CD8-positive, alpha-beta T cell (primary cell): ENCODE measurements at regions of chr3 and their contacts with region 1.

Region 1: DNA sequence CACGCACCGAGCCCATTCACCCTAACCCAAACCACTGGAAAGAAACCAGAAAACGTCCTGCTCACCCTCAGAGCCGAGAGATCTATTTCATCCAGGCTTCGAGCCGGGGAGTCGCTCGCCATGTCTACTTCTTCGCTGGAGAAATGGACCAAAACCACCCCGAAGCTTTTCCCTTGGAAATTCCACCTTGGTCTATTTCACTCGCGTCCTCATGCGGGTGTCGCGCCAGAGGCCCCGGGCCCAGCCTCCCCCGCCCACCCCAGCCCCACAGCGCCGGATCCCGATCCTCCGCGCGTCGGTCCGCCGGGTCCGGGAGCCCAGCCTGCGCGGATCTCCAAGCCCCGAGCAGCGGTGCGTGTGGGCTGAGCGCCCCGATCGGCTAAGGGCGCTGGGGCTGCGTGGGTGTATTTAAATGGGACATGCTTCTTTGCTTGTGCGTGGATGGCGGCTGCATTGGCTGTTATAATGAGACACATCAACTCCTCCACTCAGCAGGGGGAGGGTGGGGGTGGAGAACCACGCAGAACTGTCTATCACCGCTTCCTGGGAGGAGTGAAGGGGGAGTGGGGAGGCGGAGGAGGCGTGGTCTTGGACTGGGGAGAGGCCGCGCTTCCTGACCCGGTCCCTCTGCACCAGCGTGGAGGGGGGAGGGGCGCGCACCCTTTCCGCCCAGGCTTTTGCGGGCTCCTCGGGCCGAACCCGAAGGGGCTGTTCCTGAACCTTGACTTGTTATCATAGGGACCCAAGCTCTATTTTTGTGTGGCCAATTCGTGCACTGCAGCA is at the start of gene TNIK:
- DNase-seq: peak; percentile 86 to 98 (median 92)
- ATAC-seq: peak; percentile 85
- H3K4me3 ChIP-seq: peak within 1 kb of the TSS; percentile 84 to 96
- H3K4me3 Mint-ChIP-seq: peak within 1 kb of the TSS; percentile 96
- H3K27ac ChIP-seq: peak within 1 kb of the TSS; percentile 53 to 70
- H3K27ac Mint-ChIP-seq: peak within 1 kb of the TSS; percentile 96
- H3K4me1 ChIP-seq: peaks cover 40% of the 10 kb centered on the region
- H3K4me1 Mint-ChIP-seq: peaks cover 48% of the 10 kb centered on the region
- H3K27me3 ChIP-seq: no peaks in the 10 kb centered on the region
- H3K27me3 Mint-ChIP-seq: no peaks in the 10 kb centered on the region
- CTCF ChIP-seq: peak; percentile 57
- total RNA-seq, gene TNIK: 60.8 to 65.1 TPM

Region 2: DNA sequence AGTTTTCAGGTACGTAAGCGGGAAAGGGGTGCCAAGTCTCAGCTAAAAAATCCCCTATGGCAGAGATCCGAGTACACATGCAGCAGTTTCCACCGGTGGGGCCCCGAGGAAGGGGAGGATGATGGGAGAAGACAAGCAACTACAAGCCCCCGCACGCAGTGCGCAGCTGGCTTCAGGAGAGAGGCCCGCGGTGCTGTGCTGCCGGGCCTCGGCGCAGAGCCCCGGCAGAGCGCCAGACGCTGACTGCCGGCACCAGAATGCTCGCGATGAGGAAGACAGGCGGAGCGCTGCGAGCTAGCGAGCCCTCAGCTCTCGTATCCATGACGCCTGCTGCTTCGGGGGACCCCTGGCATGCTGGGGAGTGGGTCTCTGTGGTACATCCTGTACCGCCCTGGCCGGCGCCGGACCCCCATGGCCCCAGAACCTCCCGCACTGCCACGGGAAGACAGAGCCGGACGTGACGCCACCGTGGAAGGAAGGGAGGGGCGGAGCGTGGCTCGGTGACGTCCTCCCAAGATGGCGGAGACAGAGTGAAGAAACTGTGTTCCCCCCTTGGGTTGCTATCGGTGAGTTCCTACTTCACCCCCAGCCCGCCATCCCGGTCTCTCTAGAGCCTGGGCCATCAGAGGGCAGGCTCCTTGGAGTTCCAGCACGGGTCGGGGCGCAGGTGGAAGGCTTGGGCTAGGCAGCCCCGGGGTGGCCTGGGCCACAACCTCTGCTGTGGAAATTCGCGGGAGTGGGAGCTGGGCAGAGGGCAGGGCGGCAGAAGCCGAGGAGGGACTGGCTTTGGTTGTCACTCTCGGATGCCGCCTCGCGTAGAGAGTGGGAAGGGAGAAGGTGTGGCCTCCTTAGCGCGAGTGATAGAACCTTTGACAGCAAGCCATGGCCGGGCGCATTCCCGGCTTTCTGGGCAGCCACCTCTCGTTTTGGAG is 1687.0 kb before region 1 on chr3 and contains the start of gene MYNN:
- CTCF ChIA-PET with region 1: no interaction called
- POLR2A ChIA-PET with region 1: no interaction called
- intact Hi-C with region 1: loop called (anchors 5 to 10 kb)
- DNase-seq: peak; percentile 83 to 97 (median 92)
- ATAC-seq: peak; percentile 78
- H3K4me3 ChIP-seq: peak within 1 kb of the TSS; percentile 93 to 99
- H3K4me3 Mint-ChIP-seq: peak within 1 kb of the TSS; percentile 99
- H3K27ac ChIP-seq: peak within 1 kb of the TSS; percentile 97 to 100
- H3K27ac Mint-ChIP-seq: peak within 1 kb of the TSS; percentile 99
- H3K4me1 ChIP-seq: peaks cover 30% of the 10 kb centered on the region
- H3K4me1 Mint-ChIP-seq: peaks cover 50% of the 10 kb centered on the region
- H3K27me3 ChIP-seq: no peaks in the 10 kb centered on the region
- H3K27me3 Mint-ChIP-seq: no peaks in the 10 kb centered on the region
- CTCF ChIP-seq: no peak
- total RNA-seq, gene MYNN: 21.1 to 24.7 TPM

Region 3: DNA sequence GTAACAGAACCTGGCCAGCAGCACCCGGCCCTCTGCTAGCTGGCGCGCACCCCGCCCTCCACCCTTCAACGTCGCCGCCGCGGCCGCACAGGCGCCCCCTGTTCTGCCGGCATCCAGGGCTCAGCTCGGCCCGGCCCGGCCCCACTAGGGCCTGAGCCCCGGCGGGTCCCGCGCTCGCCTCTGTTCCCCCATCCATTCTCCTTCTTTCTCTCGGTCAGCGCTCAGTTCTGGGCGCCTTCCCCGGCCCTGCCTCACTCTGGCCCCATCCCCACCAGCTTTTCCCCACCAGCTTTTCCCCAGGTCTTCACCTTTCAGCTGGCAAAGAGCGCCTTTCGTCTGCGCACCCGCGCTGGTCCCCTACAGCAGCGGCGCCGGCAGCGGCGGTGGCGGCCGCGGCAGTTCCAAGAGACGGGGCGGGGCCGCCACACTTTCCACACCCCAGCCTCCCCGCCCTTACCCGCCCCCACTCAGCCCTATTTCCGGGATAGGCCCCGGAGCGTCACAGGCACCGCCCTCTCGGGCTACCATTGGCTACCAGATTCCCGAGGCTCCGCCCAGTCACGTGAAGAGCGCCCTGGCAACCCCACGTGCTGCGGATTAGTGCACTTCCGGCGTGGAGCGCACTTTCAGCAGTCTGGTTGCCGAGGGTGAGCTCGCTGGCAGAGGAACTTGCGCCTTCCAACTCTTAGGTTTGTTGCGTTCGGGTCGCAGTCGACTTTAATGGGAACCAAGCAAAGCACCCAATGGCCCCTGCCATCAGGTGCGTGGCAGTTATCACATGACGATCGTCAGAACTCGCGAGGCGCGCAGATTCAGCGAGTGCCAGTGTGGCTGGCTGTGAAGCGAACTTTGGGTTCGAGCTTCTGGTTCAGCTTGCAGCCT is 551.7 kb before region 1 on chr3 and contains the start of gene EIF5A2:
- CTCF ChIA-PET with region 1: no interaction called
- POLR2A ChIA-PET with region 1: no interaction called
- intact Hi-C with region 1: loop called in 1 of 2 experiments (anchors 10 kb)
- DNase-seq: peak; percentile 89 to 98 (median 95)
- ATAC-seq: peak; percentile 96
- H3K4me3 ChIP-seq: peak within 1 kb of the TSS; percentile 66 to 68
- H3K4me3 Mint-ChIP-seq: peak within 1 kb of the TSS; percentile 95
- H3K27ac ChIP-seq: peak within 1 kb of the TSS; percentile 67 to 79
- H3K27ac Mint-ChIP-seq: peak within 1 kb of the TSS; percentile 97
- H3K4me1 ChIP-seq: peaks cover 12% of the 10 kb centered on the region
- H3K4me1 Mint-ChIP-seq: peaks cover 20% of the 10 kb centered on the region
- H3K27me3 ChIP-seq: no peaks in the 10 kb centered on the region
- H3K27me3 Mint-ChIP-seq: no peaks in the 10 kb centered on the region
- CTCF ChIP-seq: no peak
- total RNA-seq, gene EIF5A2: 10.6 to 12.7 TPM

Region 4: GRCh38 chr3:171113714-171114113 is 346.4 kb before region 1 on chr3:
- CTCF ChIA-PET with region 1: no interaction called
- POLR2A ChIA-PET with region 1: no interaction called
- intact Hi-C with region 1: no loop called
- DNase-seq: no peak
- ATAC-seq: no peak
- H3K4me3 ChIP-seq: no peak overlapping the region
- H3K4me3 Mint-ChIP-seq: no peak overlapping the region
- H3K27ac ChIP-seq: no peak overlapping the region
- H3K27ac Mint-ChIP-seq: no peak overlapping the region
- H3K4me1 ChIP-seq: no peaks in the 10 kb centered on the region
- H3K4me1 Mint-ChIP-seq: no peaks in the 10 kb centered on the region
- H3K27me3 ChIP-seq: no peaks in the 10 kb centered on the region
- H3K27me3 Mint-ChIP-seq: no peaks in the 10 kb centered on the region
- CTCF ChIP-seq: no peak

Region 5: DNA sequence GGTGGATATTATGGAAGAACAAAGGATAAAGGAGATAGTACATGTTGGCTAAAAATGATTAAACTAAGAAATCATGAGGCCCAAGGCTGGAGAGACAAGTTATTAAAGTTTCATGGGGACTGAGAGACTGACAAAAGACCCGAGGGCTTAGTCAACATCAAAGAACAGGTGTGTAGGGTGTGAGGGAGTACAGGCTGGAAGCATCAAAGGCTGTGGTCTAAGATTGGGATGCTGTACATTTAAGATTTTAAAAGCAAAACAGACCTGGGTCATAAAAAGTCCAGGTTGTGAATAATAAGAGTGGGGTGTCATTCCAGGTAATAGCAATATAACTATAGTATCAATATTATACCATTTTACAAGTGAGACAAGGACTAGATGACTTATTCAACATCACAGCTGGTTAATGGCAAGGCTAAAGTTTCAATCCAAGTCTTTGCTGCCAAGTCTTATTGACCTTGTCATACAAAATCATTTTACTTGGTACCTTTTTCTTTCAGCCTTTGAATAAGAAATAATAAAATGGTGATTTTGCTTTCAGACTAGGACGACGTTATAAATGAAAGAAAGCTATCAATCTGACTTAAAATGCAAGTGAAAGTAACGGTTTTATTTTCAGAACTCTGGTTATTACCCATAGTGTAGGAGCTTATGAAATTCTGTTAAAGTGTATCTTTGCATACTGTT is 211.6 kb before region 1 on chr3:
- CTCF ChIA-PET with region 1: no interaction called
- POLR2A ChIA-PET with region 1: no interaction called
- intact Hi-C with region 1: loop called (anchors 5 kb)
- DNase-seq: peak in 1 of 9 experiments; percentile 31
- ATAC-seq: peak; percentile 54
- H3K4me3 ChIP-seq: no peak overlapping the region
- H3K4me3 Mint-ChIP-seq: no peak overlapping the region
- H3K27ac ChIP-seq: peak overlapping the region in 1 of 2 experiments; percentile 35
- H3K27ac Mint-ChIP-seq: no peak overlapping the region
- H3K4me1 ChIP-seq: peaks cover 48% of the 10 kb centered on the region
- H3K4me1 Mint-ChIP-seq: peaks cover 31% of the 10 kb centered on the region
- H3K27me3 ChIP-seq: no peaks in the 10 kb centered on the region
- H3K27me3 Mint-ChIP-seq: no peaks in the 10 kb centered on the region
- CTCF ChIP-seq: no peak

Region 6: DNA sequence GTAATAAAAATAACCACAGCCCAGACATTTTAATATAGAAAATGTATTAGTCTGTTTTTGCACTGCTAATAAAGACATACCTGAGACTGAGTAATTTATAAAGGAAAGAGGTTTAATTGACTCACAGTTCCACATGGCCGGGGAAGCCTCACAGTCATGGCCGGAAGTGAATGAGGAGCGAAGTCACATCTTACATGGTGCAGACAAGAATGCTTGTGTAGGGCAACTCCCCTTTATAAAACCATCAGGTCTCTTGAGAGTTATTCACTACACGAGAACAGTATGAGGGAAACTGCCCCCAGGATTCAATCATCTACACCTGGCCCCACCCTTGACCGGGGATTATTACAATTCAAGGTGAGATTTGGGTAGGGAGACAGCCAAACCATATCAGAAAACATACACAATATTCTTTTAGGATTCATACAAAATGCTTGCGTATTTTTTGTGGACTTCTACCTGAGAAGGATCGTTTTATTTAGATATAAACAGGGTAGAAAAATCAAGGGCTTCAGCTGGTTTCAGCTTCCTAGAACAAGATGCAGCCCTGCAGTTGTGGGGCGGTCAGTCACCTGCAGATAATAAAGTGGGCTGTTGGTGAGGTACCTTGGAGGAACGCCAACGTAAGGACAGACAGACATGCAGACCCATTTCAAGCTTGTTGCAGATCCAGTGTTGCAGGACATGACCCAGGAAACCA is 101.8 kb before region 1 on chr3:
- CTCF ChIA-PET with region 1: no interaction called
- POLR2A ChIA-PET with region 1: no interaction called
- intact Hi-C with region 1: loop called in 1 of 2 experiments (anchors 5 kb)
- DNase-seq: no peak
- ATAC-seq: no peak
- H3K4me3 ChIP-seq: no peak overlapping the region
- H3K4me3 Mint-ChIP-seq: no peak overlapping the region
- H3K27ac ChIP-seq: no peak overlapping the region
- H3K27ac Mint-ChIP-seq: no peak overlapping the region
- H3K4me1 ChIP-seq: peaks cover 6% of the 10 kb centered on the region
- H3K4me1 Mint-ChIP-seq: peaks cover 88% of the 10 kb centered on the region
- H3K27me3 ChIP-seq: no peaks in the 10 kb centered on the region
- H3K27me3 Mint-ChIP-seq: no peaks in the 10 kb centered on the region
- CTCF ChIP-seq: no peak

Region 7: GRCh38 chr3:171491361-171491760 is 31.2 kb after region 1 on chr3:
- CTCF ChIA-PET with region 1: interaction called, 4 read pairs
- POLR2A ChIA-PET with region 1: interaction called, 7 read pairs
- intact Hi-C with region 1: loop called (anchors 1 to 2 kb)
- DNase-seq: peak in 2 of 9 experiments; percentile 31 to 61
- ATAC-seq: peak; percentile 40
- H3K4me3 ChIP-seq: peak overlapping the region; percentile 25 to 32
- H3K4me3 Mint-ChIP-seq: peak overlapping the region; percentile 50
- H3K27ac ChIP-seq: peak overlapping the region in 1 of 2 experiments; percentile 57
- H3K27ac Mint-ChIP-seq: peak overlapping the region; percentile 66
- H3K4me1 ChIP-seq: peaks cover 39% of the 10 kb centered on the region
- H3K4me1 Mint-ChIP-seq: peaks cover 47% of the 10 kb centered on the region
- H3K27me3 ChIP-seq: no peaks in the 10 kb centered on the region
- H3K27me3 Mint-ChIP-seq: no peaks in the 10 kb centered on the region
- CTCF ChIP-seq: no peak

Region 8: DNA sequence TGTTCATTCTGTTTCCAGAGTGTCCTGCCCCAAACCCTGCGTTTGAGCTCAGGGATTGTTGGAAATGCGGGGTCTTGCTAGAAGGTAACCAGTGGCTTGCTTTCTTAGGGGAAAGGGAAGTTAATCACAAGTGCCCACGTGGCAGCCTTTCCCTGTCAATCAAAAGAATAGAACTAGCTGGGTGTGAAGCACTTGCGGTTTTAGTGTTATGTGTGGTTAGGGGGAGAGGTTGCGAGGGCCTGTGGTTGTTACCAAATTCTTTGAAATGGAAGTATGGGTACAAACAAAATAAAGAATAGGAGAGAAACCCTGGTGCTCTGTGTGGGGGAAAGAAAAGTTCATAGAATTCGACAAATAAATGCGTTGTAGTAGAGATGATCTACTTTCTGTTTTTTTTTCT is 646.9 kb after region 1 on chr3:
- CTCF ChIA-PET with region 1: no interaction called
- POLR2A ChIA-PET with region 1: no interaction called
- intact Hi-C with region 1: loop called in 1 of 2 experiments (anchors 2 kb)
- DNase-seq: peak; percentile 35 to 93 (median 59)
- ATAC-seq: peak; percentile 56
- H3K4me3 ChIP-seq: peak overlapping the region; percentile 25 to 28
- H3K4me3 Mint-ChIP-seq: peak overlapping the region; percentile 70
- H3K27ac ChIP-seq: peak overlapping the region; percentile 41 to 72
- H3K27ac Mint-ChIP-seq: peak overlapping the region; percentile 85
- H3K4me1 ChIP-seq: peaks cover 74% of the 10 kb centered on the region
- H3K4me1 Mint-ChIP-seq: peaks cover 81% of the 10 kb centered on the region
- H3K27me3 ChIP-seq: no peaks in the 10 kb centered on the region
- H3K27me3 Mint-ChIP-seq: no peaks in the 10 kb centered on the region
- CTCF ChIP-seq: no peak